ENCODE measurements at regions of chr3 and their contacts with region 1.

Region 1: DNA sequence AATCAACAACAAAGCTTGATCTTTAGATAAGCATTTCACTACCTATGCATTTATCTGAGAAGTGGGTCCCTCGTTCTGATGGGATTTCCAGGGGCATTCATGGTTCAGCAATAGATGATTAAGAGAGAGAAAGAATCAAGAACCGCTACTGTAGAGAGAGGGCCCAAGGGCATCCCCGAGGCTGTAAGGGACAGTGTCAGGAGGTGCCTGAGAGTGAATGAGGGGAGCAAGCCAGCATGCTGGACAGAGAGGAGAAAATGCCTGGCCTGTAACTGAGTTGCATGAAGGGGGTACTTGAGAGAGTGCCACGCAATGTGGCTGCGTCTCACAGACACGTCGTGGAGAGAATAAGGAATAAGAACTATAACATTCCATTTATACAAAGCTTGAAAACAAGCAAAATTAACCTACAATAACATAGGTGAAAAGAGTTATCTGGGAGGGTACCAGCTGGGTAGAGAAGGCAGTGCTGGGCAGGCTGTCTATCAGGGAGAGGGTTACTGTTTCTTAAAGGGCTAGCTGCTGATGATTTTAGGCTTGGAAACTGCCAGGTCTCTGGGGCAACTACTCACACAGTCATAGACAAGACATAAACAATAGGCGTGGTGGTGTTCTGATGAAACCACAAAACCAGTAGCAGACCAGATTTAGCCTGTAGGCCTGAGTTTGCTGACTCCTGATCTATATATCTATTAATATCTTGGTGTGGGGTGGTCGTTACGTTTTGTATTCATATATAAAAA is 374.6 kb upstream of the CFAP20DC start:
- DNase-seq: peak; percentile 34
- H3K4me3 Mint-ChIP-seq: no peak overlapping the region
- H3K27ac Mint-ChIP-seq: no peak overlapping the region
- H3K4me1 Mint-ChIP-seq: peaks cover 68% of the 10 kb centered on the region
- H3K27me3 Mint-ChIP-seq: peaks cover 4% of the 10 kb centered on the region

Region 2: GRCh38 chr3:59212128-59212779 is 212.2 kb before region 1 on chr3:
- CTCF ChIA-PET with region 1: interaction called, 3 read pairs
- intact Hi-C with region 1: loop called (anchors 2 kb)
- DNase-seq: no peak
- H3K4me3 Mint-ChIP-seq: no peak overlapping the region
- H3K27ac Mint-ChIP-seq: no peak overlapping the region
- H3K4me1 Mint-ChIP-seq: peaks cover 2% of the 10 kb centered on the region
- H3K27me3 Mint-ChIP-seq: no peaks in the 10 kb centered on the region

Region 3: DNA sequence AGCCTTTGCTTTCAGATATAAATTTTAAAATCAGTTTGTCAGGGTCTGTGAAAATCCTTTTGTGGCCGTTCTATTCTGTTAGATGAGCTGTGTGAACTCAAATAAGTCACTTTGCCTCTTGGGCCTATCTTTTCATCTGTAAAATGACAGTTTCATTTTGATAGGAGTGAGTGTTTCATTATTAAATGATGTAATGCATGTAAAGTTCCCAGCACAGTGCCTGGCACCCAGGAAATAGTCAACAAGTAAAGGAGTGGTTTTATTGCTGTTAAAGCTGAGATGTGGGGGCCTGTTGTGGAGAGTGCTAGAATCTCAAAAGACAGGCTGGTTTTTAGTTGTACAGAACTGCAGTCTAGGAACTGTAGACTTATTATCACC is 19.8 kb after region 1 on chr3:
- CTCF ChIA-PET with region 1: interaction called, 4 read pairs
- intact Hi-C with region 1: loop called (anchors 1 kb)
- DNase-seq: peak; percentile 66
- H3K4me3 Mint-ChIP-seq: peak overlapping the region; percentile 54
- H3K27ac Mint-ChIP-seq: peak overlapping the region; percentile 94
- H3K4me1 Mint-ChIP-seq: peaks cover 53% of the 10 kb centered on the region
- H3K27me3 Mint-ChIP-seq: no peaks in the 10 kb centered on the region

Region 4: DNA sequence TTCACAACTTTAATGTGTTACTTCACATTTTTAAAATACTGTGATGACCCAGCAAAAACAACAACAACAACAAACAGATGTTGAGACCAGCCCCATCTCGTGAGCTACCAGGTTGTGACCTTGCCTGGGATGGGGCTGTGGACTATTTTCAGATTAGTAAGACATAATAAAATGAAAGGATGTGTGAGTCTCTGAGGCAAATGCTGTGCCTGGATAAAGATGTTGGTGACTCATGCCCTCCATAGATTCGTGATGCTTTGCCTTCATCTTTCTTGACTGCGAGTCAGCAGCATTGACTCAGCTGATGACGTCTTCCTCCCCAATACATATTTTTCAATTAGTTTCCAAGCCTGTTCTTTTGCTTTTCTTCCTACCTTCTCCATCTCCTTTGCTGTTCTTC is 78.4 kb after region 1 on chr3:
- CTCF ChIA-PET with region 1: no interaction called
- intact Hi-C with region 1: loop called (anchors 1 kb)
- DNase-seq: peak; percentile 73
- H3K4me3 Mint-ChIP-seq: no peak overlapping the region
- H3K27ac Mint-ChIP-seq: no peak overlapping the region
- H3K4me1 Mint-ChIP-seq: peaks cover 18% of the 10 kb centered on the region
- H3K27me3 Mint-ChIP-seq: no peaks in the 10 kb centered on the region

Region 5: DNA sequence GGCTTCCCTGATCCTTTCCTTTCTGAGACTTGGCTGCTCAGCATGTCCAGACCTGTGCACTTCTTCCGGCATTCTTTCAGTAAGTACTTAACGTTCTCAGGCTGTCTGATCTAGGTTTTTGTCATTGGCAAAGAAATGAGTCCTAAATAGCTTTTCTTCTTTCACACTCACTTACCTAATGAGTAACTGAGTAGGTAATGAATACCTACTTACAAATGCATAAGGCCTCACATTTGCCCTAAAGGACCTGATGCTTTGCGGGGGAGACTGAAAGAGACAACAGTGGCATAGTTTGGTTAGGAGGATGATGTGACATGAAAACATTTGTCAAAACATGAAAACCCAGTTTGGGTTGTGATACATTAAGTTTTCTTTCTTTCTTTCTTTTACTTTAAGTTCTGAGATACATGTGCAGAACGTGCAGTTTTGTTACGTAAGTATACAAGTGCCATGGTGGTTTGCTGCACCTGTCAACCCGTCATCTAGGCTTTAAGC is 142.1 kb after region 1 on chr3:
- CTCF ChIA-PET with region 1: no interaction called
- intact Hi-C with region 1: loop called (anchors 1 kb)
- DNase-seq: peak; percentile 43
- H3K4me3 Mint-ChIP-seq: no peak overlapping the region
- H3K27ac Mint-ChIP-seq: peak overlapping the region; percentile 7
- H3K4me1 Mint-ChIP-seq: peaks cover 15% of the 10 kb centered on the region
- H3K27me3 Mint-ChIP-seq: no peaks in the 10 kb centered on the region

Region 6: DNA sequence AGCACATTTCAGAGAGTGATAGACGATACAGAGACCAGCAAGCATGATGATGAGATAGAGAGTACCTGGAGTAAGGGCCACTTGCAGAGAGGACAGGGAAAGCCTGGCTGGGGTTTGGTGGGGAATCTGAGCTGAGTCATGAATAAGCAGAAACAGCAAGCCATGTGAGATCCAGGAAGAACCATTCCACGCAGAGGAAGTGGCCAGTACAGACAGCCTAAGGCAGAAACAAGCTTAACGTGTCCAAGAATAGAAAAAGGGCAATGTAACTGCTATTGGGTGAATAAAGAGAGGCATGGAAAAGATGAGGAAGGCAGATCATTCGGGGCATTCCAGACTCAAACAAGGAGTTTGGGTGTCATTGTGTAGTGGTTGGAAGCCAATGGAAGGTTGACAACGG is 441.6 kb after region 1 on chr3:
- CTCF ChIA-PET with region 1: no interaction called
- intact Hi-C with region 1: loop called (anchors 5 kb)
- DNase-seq: no peak
- H3K4me3 Mint-ChIP-seq: no peak overlapping the region
- H3K27ac Mint-ChIP-seq: no peak overlapping the region
- H3K4me1 Mint-ChIP-seq: peaks cover 59% of the 10 kb centered on the region
- H3K27me3 Mint-ChIP-seq: no peaks in the 10 kb centered on the region

Region 7: DNA sequence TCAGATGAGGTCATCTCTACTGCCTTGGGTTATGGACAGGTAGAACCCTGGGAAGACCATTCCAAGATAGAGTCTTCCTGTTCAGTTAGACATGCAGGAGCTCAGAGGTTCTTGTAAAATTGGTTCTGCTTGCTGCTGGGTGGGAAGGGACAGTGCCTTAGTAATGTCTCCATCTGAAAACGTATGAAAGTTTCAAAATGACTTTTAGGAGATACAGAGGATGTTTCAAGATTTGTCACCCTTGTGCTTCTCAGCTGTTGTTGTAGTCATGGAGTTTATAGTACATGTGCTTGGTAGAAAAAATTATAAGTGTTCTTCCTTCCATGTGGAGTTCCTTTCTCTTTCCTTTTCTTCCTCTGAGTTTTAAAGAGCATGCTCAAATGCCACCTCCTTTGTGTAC is 510.6 kb after region 1 on chr3:
- CTCF ChIA-PET with region 1: no interaction called
- intact Hi-C with region 1: no loop called
- DNase-seq: peak; percentile 53
- H3K4me3 Mint-ChIP-seq: peak overlapping the region; percentile 50
- H3K27ac Mint-ChIP-seq: peak overlapping the region; percentile 78
- H3K4me1 Mint-ChIP-seq: peaks cover 89% of the 10 kb centered on the region
- H3K27me3 Mint-ChIP-seq: no peaks in the 10 kb centered on the region

Measured in activated naive CD4-positive, alpha-beta T cell treated with anti-CD3 and anti-CD28 coated beads for 36 hours (primary cell).